B cell (primary cell): ENCODE measurements at regions of chr1 and their contacts with region 1.

Region 1: DNA sequence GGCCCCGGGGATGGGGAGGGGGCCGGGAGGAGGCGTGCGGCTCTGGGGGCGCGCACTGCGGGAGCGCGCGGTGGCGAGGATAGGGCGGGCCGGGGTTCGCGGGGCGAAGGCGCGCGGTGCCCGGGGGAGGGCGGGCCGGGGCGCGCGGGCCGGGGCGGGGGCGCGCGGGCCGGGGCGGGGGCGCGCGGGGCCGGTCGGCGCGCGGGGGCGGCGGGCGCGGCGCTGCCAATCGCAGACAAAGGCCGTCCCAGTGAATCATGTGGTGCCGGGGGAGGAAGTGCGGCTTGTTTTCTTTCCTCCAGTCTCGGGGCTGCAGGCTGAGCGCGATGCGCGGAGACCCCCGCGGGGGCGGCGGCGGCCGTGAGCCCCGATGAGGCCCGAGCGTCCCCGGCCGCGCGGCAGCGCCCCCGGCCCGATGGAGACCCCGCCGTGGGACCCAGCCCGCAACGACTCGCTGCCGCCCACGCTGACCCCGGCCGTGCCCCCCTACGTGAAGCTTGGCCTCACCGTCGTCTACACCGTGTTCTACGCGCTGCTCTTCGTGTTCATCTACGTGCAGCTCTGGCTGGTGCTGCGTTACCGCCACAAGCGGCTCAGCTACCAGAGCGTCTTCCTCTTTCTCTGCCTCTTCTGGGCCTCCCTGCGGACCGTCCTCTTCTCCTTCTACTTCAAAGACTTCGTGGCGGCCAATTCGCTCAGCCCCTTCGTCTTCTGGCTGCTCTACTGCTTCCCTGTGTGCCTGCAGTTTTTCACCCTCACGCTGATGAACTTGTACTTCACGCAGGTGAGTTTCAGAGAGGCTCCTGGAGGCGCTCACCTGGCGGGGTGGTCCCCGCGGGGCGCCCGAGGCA is at the start of gene GPR137B:
- DNase-seq: peak; percentile 74
- ATAC-seq: peak; percentile 76
- H3K4me3 ChIP-seq: peak within 1 kb of the TSS; percentile 51 to 72 (median 62)
- H3K4me3 Mint-ChIP-seq: peak within 1 kb of the TSS; percentile 97
- H3K27ac ChIP-seq: peak within 1 kb of the TSS; percentile 7 to 12
- H3K27ac Mint-ChIP-seq: peak within 1 kb of the TSS; percentile 89
- H3K4me1 ChIP-seq: peaks cover 20 to 32% of the 10 kb centered on the region in 2 donors
- H3K4me1 Mint-ChIP-seq: peaks cover 29% of the 10 kb centered on the region
- H3K27me3 ChIP-seq: peaks cover 0 to 51% (median 19%) of the 10 kb centered on the region in 4 experiments
- H3K27me3 Mint-ChIP-seq: peaks cover 63% of the 10 kb centered on the region
- CTCF ChIP-seq: no peak
- total RNA-seq, gene GPR137B: 11.3 and 11.8 TPM in 2 replicates

Region 2: DNA sequence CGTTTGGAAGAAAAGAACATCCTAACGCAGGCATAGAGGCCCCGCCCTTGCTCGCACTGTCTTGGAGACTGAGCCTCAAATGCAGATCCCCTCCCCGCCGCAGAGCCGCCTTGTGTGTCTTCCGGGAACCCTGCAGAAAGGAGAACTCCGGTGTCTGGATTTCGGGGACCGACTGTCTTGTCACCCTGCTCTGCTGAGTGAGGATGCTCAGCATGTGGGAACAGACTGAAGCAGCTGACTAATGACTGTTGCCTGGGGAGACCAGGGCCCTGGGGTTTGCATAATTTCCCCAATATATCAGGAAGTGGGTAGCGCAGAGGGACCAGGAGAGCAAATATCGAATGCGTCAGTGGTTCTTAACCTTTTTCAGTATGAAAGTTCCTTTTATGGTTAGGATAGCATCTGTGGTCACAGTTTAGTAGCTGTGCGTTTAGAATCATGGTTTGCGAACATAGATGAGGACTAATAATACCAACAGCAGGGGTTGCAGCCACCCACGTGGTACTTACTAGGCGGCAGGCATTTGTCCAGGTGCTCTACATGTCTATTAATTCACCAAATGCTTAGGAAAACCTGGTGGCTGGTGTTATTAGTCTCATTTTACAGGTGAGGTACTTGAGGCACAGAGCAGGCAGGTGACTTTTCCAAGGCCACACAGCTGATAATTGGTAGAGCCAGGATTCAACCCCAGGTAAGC is 14.2 kb after region 1 on chr1:
- CTCF ChIA-PET with region 1: interaction called, 7 read pairs
- POLR2A ChIA-PET with region 1: interaction called, 5 read pairs
- intact Hi-C with region 1: loop called (anchors 1 kb)
- DNase-seq: peak; percentile 84
- ATAC-seq: peak; percentile 89
- H3K4me3 ChIP-seq: no peak overlapping the region
- H3K4me3 Mint-ChIP-seq: peak overlapping the region; percentile 73
- H3K27ac ChIP-seq: no peak overlapping the region
- H3K27ac Mint-ChIP-seq: peak overlapping the region; percentile 84
- H3K4me1 ChIP-seq: peaks cover 31 to 48% of the 10 kb centered on the region in 2 donors
- H3K4me1 Mint-ChIP-seq: peaks cover 59% of the 10 kb centered on the region
- H3K27me3 ChIP-seq: peaks cover 0 to 36% (median 16%) of the 10 kb centered on the region in 4 experiments
- H3K27me3 Mint-ChIP-seq: peaks cover 29% of the 10 kb centered on the region
- CTCF ChIP-seq: no peak

Region 3: DNA sequence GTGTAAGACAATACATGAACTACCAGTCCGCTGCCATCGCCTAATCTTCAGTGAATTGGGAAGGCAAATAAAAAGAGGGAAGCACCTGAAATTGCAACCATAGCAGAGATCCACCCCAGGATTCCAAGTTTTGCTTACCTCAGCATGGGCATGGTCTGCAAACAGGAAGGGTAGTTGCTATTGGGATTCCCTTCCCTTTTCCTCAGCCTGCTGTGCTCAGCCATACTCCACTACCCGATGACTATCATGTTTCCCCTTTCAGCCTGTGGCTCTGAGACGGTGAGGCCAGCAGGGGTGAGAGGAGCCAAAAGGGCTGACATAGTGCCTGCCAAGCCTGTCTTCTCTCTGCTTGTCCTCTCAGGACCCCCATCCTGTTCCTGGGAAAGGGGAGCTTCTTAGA is 64.1 kb after region 1 on chr1:
- CTCF ChIA-PET with region 1: no interaction called
- POLR2A ChIA-PET with region 1: no interaction called
- intact Hi-C with region 1: no loop called
- DNase-seq: no peak
- ATAC-seq: no peak
- H3K4me3 ChIP-seq: no peak overlapping the region
- H3K4me3 Mint-ChIP-seq: no peak overlapping the region
- H3K27ac ChIP-seq: no peak overlapping the region
- H3K27ac Mint-ChIP-seq: no peak overlapping the region
- H3K4me1 ChIP-seq: no peaks in the 10 kb centered on the region
- H3K4me1 Mint-ChIP-seq: no peaks in the 10 kb centered on the region
- H3K27me3 ChIP-seq: no peaks in the 10 kb centered on the region
- H3K27me3 Mint-ChIP-seq: no peaks in the 10 kb centered on the region
- CTCF ChIP-seq: no peak